ENCODE measurements at regions of chr11 and their contacts with region 1.

Region 1: DNA sequence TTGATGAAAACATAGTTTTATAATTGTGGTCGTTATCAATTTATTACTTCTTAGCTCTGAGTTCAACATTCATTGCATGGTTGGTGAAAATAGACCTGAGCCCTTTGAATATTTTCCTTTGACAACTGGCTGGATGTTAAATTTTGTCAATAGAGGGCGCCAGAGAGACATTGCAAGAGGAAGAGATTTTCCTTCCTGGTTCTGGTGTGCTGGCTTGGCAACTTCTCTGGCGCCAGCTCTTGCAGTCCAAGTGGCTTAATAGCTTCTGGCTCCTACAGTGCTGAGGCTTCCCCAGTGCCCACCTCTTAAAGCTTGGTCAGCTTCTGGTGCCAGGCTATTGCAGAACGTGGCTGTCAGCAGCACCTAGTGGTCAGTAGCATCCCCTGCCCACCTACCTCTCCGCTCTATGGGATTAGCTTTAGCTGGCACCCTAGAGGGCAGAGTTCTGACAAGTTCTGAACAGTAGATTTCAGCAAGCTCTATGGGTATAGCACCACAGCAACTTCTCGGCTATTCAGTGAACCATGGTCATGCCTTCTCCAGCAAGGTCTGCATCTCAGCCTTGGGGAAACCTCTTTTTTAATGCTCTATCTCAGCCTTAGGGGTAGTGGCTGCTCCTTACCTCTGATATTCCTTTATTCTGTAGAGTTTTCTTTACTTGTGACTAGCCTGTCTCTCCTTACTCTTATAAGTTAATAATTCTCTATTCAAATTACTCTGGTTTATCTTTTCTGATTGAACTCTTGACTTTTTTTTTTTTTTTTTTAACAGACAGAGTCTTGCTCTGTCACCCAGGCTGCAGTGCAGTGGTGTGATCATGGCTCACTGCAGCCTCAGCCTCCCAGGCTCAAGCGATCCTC is 59.4 kb downstream of the ACER3 start:
- DNase-seq: peak; percentile 80
- ATAC-seq: peak; percentile 97

Region 2: GRCh38 chr11:76734456-76735420 is 185.4 kb before region 1 on chr11:
- intact Hi-C with region 1: loop called (anchors 5 kb)
- DNase-seq: no peak
- ATAC-seq: no peak

Region 3: GRCh38 chr11:76810151-76810853 is 109.8 kb before region 1 on chr11:
- intact Hi-C with region 1: loop called (anchors 2 kb)
- DNase-seq: no peak
- ATAC-seq: no peak

Region 4: GRCh38 chr11:76974179-76974891 is 54.2 kb after region 1 on chr11:
- intact Hi-C with region 1: no loop called
- DNase-seq: no peak
- ATAC-seq: no peak